ENCODE measurements at regions of chr14 and their contacts with region 1.

Region 1: DNA sequence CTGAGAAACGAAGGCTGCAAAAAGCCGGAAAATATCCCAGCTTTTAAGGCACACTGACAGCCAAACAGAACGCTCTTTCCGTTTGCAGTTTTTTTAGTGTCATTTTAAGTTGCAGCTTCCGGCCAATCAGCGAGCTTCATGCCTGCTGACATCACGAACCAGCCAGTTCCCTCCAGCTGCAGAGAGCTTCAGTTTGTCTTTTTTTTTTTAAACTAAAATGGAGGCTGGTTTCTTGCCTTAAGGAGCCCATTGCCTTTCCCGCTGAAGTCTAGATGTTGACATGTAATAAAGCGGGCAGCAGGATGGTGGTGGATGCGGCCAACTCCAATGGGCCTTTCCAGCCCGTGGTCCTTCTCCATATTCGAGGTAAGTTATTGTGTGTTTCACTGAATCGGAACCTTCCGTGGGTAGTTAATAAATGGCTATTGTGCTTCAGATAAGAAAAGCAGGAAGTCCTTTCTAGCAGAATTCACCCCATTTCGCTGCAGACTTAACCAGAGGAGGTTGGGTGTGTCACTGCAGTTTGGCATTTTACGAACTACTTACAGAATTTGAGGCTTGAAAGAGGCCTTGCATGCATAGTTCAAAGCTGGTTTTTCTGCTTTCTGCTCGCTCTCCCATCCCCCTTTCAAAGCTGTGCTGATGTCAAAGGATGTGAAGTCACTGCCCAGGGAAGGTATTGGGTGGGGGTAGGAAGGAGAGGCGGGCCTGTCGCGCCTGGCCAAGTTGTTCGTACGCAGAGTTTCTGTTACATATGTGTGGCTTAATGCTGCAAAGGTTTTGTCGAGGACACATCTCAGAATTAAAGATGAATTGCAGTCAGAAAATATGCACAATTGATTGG is 48.4 kb downstream of the PPP2R5C start:
- DNase-seq: peak; percentile 84 to 90 (median 90)
- ATAC-seq: peak; percentile 92 to 96 (median 94)
- H3K4me3 ChIP-seq: peak overlapping the region; percentile 32 to 84 (median 65)
- H3K27ac ChIP-seq: peak overlapping the region; percentile 92 to 99 (median 97)
- H3K4me1 ChIP-seq: peaks cover 7 to 59% (median 46%) of the 10 kb centered on the region in 12 donors
- H3K27me3 ChIP-seq: no peaks in the 10 kb centered on the region
- CTCF ChIP-seq: no peak
- POLR2A ChIP-seq: peak; percentile 9 to 56

Region 2: GRCh38 chr14:101876555-101876938 is 66.7 kb after region 1 on chr14:
- intact Hi-C with region 1: loop called in 2 of 10 experiments (anchors 5 kb)
- DNase-seq: peak; percentile 82 to 92 (median 86)
- ATAC-seq: peak; percentile 76 to 92 (median 84)
- H3K4me3 ChIP-seq: peak overlapping the region in 1 of 12 donors; percentile 0
- H3K27ac ChIP-seq: peak overlapping the region; percentile 46 to 92 (median 80)
- H3K4me1 ChIP-seq: peaks cover 8 to 79% (median 48%) of the 10 kb centered on the region in 12 donors
- H3K27me3 ChIP-seq: no peaks in the 10 kb centered on the region
- CTCF ChIP-seq: no peak
- POLR2A ChIP-seq: no peak

Measured in heart left ventricle (tissue), 16 donors.